ENCODE measurements at regions of chrX and their contacts with region 1.

Region 1: GRCh38 chrX:15471016-15471415 is 22.1 kb downstream of the PIR start:
- DNase-seq: peak; percentile 48
- CTCF ChIP-seq: peak; percentile 62

Region 2: DNA sequence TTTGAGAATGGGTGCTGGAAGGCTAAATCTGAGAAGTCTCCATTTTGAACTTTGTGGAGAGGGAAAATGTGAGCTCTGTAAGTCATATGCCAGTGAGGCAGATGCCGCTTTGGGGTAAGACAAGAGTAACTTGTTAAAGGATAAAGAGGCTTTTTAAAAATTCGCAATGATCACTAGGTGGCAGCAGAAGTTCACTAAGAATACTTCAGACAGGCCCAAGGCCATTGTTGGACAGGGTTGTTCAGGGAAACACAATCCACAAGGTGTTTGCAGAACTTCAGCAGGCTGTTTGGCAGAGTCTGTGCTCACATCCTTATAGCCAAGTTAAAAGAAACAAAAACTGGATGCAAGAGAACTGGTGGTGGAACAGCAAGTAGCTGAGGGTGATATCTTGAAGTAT is 122.0 kb before region 1 on chrX:
- CTCF ChIA-PET with region 1: interaction called, 124 read pairs
- POLR2A ChIA-PET with region 1: no interaction called
- DNase-seq: peak; percentile 23
- CTCF ChIP-seq: peak; percentile 15

Region 3: GRCh38 chrX:15564981-15565579 is 94.1 kb after region 1 on chrX:
- CTCF ChIA-PET with region 1: interaction called, 16 read pairs
- POLR2A ChIA-PET with region 1: no interaction called
- DNase-seq: peak; percentile 24
- CTCF ChIP-seq: peak; percentile 45

Measured in GM10248 (cell line).